ENCODE measurements at regions of chr1 and their contacts with region 1.

Region 1: DNA sequence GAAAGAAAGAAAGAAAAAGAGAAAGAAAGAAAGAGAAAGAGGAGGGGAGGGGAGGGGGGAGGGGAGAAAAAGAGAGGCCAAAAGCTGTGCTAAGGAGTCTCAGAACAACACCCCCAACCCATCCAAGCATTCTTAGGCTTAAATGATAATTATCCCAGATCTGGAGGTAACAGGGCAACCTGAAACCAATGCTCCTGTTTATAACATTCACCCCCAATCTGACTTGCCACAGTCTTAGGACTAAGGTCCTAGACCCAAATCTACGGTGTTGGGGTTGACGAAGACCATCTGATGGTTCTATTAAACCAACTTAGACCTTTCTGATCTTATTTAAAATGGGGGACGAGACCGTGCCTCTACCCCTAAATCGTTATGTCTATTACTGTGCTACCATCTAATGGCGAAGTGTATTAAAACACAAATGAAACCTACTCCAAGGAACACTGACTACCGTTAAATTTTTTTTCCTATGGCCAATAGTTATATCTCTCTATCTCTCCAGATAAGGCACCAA is 119.3 kb upstream of the CDC42BPA start:
- DNase-seq: peak; percentile 50
- CTCF ChIP-seq: no peak

Region 2: DNA sequence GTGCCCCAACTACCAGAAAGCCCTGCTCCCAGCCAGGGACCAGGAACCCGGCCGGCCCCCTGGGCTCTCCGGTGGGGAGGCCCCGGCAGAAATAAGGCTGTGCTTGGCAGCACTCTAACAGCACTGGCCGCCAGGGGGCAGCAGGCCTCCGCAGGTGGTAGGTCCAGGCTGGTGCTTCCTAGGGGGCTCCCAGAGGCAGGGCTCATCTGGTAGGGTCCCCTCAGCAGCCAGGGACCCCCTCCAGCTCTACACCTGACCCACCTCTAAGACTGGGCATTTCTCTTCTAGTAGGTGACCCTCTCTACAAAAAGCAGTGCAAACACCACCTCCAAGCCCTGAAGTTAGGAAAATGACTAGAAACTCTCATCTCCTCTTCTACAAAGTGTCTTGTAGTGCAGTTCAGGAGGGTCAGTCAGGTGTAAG is 803.4 kb before region 1 on chr1:
- in situ Hi-C with region 1: loop called (anchors 25 kb)
- DNase-seq: peak; percentile 86
- CTCF ChIP-seq: peak; percentile 95

Region 3: DNA sequence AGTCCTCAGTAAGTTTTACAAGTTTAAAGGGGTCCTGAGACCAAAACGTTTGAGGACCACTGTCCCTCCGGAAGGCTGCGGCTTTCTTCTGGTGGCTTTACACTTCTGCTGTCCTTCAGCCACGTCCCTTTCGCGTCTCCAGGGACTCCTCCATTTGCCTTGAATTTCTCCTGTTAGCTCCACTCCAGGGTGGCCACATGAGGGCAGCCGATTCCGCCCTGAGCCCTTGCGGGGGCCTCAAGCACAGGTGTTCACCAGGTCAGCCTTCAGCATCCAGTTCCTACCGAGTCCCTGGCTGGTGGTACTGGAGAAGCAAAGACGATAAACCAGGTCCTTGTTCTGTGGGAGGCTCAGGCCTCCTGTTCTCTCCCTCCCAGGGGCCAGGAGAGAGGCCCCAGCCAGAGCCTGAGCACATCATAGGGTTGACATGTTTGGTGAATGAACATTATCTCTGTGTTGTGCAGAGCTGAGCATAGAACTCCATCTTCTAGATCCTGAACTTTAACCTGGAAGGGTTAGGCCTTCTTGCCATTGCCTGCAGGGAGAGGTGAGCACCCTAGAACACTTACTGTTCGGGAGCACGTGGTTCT is 524.9 kb before region 1 on chr1:
- in situ Hi-C with region 1: loop called (anchors 25 kb)
- DNase-seq: peak; percentile 76
- CTCF ChIP-seq: peak; percentile 55

Region 4: DNA sequence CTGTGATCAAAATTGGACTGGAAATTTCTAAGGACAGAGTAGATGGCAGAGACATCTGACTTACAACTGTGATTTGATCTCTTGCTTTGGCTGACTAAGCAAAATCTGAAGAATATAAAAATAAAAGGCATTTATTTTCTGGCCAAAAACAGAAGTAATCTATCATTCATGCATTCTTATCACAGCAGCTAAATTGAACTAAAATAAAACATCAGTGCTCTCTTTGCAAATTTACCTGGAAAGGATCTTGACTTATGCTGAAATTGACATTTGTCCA is 44.4 kb after region 1 on chr1:
- in situ Hi-C with region 1: no loop called
- DNase-seq: no peak
- CTCF ChIP-seq: no peak

Measured in GM13976 (cell line).